ENCODE measurements at regions of chr7 and their contacts with region 1.

Region 1: GRCh38 chr7:90244909-90245851 is at the start of gene CFAP69:
- DNase-seq: peak; percentile 92
- ATAC-seq: peak; percentile 97
- H3K4me3 Mint-ChIP-seq: peak within 1 kb of the TSS; percentile 77
- H3K27ac Mint-ChIP-seq: peak within 1 kb of the TSS; percentile 0
- H3K4me1 Mint-ChIP-seq: peaks cover 16% of the 10 kb centered on the region
- H3K27me3 Mint-ChIP-seq: peaks cover 32% of the 10 kb centered on the region
- total RNA-seq, gene CFAP69: 0.25 to 0.70 TPM

Region 2: GRCh38 chr7:89908736-89909135 is 336.4 kb before region 1 on chr7:
- CTCF ChIA-PET with region 1: no interaction called
- POLR2A ChIA-PET with region 1: no interaction called
- intact Hi-C with region 1: no loop called
- DNase-seq: no peak
- ATAC-seq: no peak
- H3K4me3 Mint-ChIP-seq: no peak overlapping the region
- H3K27ac Mint-ChIP-seq: no peak overlapping the region
- H3K4me1 Mint-ChIP-seq: no peaks in the 10 kb centered on the region
- H3K27me3 Mint-ChIP-seq: no peaks in the 10 kb centered on the region

Region 3: DNA sequence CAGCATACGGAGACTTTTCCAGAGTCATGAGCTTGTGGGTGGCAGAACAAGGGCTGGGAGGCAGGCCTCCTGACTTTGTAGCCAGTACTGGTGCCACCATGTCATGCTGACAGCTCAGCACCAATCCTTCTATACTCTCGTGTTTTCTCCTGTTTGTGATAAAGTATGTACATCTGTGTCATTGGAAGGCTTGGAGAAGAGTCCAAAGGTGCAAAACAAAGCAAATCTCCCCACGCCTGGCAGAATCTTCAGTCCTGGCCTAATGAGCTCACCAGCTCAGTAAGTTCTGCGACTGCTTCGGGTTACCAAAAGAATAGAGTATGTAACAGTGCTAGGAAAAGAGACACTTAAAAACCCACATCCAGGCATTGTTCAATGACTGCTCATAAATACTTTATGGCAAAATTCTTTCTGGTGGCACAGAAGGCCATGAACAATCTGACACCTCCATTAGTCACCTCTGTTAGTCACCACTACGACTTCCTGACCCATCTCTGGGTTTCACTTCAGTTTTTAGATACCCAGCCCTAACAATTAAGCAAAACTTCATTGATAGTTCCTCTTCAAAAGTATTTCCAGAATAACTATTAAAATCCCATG is 66.4 kb before region 1 on chr7:
- CTCF ChIA-PET with region 1: no interaction called
- POLR2A ChIA-PET with region 1: interaction called, 4 read pairs
- intact Hi-C with region 1: loop called in 1 of 2 experiments (anchors 1 kb)
- DNase-seq: peak; percentile 28
- ATAC-seq: peak; percentile 98
- H3K4me3 Mint-ChIP-seq: no peak overlapping the region
- H3K27ac Mint-ChIP-seq: peak overlapping the region; percentile 84
- H3K4me1 Mint-ChIP-seq: peaks cover 20% of the 10 kb centered on the region
- H3K27me3 Mint-ChIP-seq: peaks cover 9% of the 10 kb centered on the region

Region 4: DNA sequence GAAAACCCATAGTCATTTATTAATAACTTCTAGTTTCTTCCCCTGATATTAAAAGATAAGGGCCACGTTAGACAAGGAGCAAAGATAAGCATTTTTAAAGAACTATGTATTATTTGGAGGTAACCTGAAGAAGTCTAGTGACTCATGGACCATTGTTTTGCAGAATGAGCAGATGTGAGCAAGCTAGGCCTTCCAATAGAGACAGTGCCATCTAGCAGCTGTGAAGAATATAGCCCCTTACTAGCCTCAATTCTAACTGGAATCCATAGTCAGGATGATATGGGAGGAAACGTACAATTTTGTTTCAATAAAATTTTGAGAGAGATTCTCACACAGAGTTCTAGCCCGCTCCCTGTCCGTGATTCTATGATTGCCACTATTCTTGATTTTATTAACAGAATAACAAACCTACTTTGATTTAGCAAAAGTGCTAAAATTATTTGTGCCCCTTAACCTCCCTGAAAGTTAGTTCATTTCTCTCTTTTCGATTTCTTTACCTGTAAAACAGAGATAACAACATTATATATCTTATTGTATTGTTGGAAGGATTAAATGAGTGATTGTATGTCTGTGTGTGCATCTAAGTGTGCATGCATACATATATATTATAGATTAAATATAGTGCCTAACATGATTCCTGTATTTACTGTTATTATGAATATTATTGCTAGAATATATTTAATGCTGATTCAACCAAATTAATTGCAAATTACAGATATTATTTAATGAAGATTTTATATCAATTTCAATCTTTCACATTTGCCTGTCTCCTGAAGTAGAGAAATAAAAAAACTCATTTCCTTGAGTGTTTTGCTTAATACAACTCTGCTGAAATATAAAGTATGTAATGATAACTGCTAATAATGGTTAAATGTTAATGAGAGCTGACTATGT is 53.2 kb after region 1 on chr7:
- CTCF ChIA-PET with region 1: no interaction called
- POLR2A ChIA-PET with region 1: no interaction called
- intact Hi-C with region 1: loop called in 1 of 2 experiments (anchors 5 kb)
- DNase-seq: peak; percentile 8
- ATAC-seq: peak; percentile 94
- H3K4me3 Mint-ChIP-seq: no peak overlapping the region
- H3K27ac Mint-ChIP-seq: no peak overlapping the region
- H3K4me1 Mint-ChIP-seq: no peaks in the 10 kb centered on the region
- H3K27me3 Mint-ChIP-seq: peaks cover 4% of the 10 kb centered on the region

Region 5: GRCh38 chr7:90403174-90404113 is 158.3 kb after region 1 on chr7 and contains the start of gene CLDN12:
- CTCF ChIA-PET with region 1: no interaction called
- POLR2A ChIA-PET with region 1: no interaction called
- intact Hi-C with region 1: loop called in 1 of 2 experiments (anchors 1 kb)
- DNase-seq: peak; percentile 88
- ATAC-seq: peak; percentile 98
- H3K4me3 Mint-ChIP-seq: peak within 1 kb of the TSS; percentile 96
- H3K27ac Mint-ChIP-seq: peak within 1 kb of the TSS; percentile 97
- H3K4me1 Mint-ChIP-seq: peaks cover 11% of the 10 kb centered on the region
- H3K27me3 Mint-ChIP-seq: no peaks in the 10 kb centered on the region
- total RNA-seq, gene CLDN12: 5.4 to 5.8 TPM

Measured in activated CD4-positive, alpha-beta T cell treated with anti-CD3 and anti-CD28 coated beads for 36 hours (primary cell).